H1 (cell line): ENCODE measurements at regions of chr9 and their contacts with region 1.

Region 1: GRCh38 chr9:132644251-132644650 is 25.5 kb downstream of the DDX31 start:
- DNase-seq: no peak
- H3K4me3 ChIP-seq: no peak overlapping the region
- H3K27ac ChIP-seq: no peak overlapping the region
- H3K4me1 ChIP-seq: no peaks in the 10 kb centered on the region
- H3K27me3 ChIP-seq: no peaks in the 10 kb centered on the region
- CTCF ChIP-seq: peak; percentile 31 to 61 (median 54); a peak in 3 of 4 replicates
- EP300 ChIP-seq: no peak
- POLR2A ChIP-seq: no peak
- RAD21 ChIP-seq: peak; percentile 31 to 47; a peak in 3 of 4 replicates

Region 2: GRCh38 chr9:132614324-132614723 is 29.9 kb before region 1 on chr9:
- CTCF ChIA-PET with region 1: interaction called, 17 read pairs
- POLR2A ChIA-PET with region 1: no interaction called
- DNase-seq: no peak
- H3K4me3 ChIP-seq: no peak overlapping the region
- H3K27ac ChIP-seq: no peak overlapping the region
- H3K4me1 ChIP-seq: peaks cover 4 to 11% (median 6%) of the 10 kb centered on the region in 4 experiments; a peak in 4 of 7 replicates
- H3K27me3 ChIP-seq: no peaks in the 10 kb centered on the region
- CTCF ChIP-seq: no peak
- EP300 ChIP-seq: no peak
- POLR2A ChIP-seq: no peak
- RAD21 ChIP-seq: no peak

Region 3: DNA sequence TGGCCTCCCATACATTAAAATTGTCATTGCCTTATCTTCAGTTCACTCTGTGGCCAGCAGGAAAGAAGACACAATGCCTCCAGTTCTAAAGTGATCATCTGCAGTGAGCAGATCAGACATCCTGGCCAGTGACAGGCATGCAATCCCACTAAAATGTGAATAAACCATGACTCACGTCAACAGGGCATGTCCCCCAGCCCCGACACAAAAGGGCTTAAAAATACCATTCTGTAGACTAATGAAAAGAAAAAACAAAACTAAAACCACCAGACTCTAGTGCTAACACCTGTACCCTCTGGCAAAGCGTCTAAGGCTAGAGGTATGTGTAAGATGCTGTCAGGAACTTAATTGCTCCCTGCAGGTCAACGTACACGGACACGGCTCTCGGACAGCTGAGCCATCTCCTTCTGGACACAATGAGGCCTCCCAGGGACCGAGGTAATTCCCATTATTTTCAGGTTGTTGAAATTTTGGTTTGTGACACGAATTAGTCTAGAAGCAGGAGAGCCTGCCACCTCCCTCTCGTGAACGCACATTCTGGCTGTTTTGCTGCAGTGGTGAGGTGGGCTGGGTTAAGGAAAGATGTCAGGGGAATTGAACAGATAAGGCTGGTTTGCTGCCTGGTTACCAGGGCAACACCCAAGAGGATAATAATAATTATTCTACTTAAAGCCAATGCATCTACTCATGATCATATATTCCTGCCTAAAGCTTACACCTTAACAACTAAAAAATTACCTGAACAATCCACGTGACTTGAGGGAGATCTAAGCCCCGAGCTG is 12.8 kb before region 1 on chr9:
- CTCF ChIA-PET with region 1: interaction called, 16 read pairs
- POLR2A ChIA-PET with region 1: interaction called, 4 read pairs
- DNase-seq: no peak
- H3K4me3 ChIP-seq: no peak overlapping the region
- H3K27ac ChIP-seq: no peak overlapping the region
- H3K4me1 ChIP-seq: 0 out of 7 replicates have a peak, but pooled peaks cover 0 to 3% (median 0%) of the 10 kb centered on the region in 4 experiments
- H3K27me3 ChIP-seq: no peaks in the 10 kb centered on the region
- CTCF ChIP-seq: no peak
- EP300 ChIP-seq: no peak
- POLR2A ChIP-seq: no peak
- RAD21 ChIP-seq: no peak

Region 4: GRCh38 chr9:132732326-132733259 is 88.3 kb after region 1 on chr9:
- CTCF ChIA-PET with region 1: no interaction called
- POLR2A ChIA-PET with region 1: no interaction called
- DNase-seq: no peak
- H3K4me3 ChIP-seq: no peak overlapping the region
- H3K27ac ChIP-seq: no peak overlapping the region
- H3K4me1 ChIP-seq: no peaks in the 10 kb centered on the region; a peak in 1 of 7 replicates
- H3K27me3 ChIP-seq: no peaks in the 10 kb centered on the region; a peak in 1 of 7 replicates
- CTCF ChIP-seq: no peak
- EP300 ChIP-seq: no peak
- POLR2A ChIP-seq: no peak
- RAD21 ChIP-seq: no peak